Body of pancreas (tissue), 4 donors: ENCODE measurements at regions of chr10 and their contacts with region 1.

Region 1: GRCh38 chr10:79542626-79543025 is 17.6 kb downstream of the SFTPA2 start:
- DNase-seq: no peak
- ATAC-seq: no peak
- H3K4me3 ChIP-seq: no peak overlapping the region
- H3K27ac ChIP-seq: no peak overlapping the region
- H3K4me1 ChIP-seq: peaks cover 7% of the 10 kb centered on the region
- H3K27me3 ChIP-seq: no peaks in the 10 kb centered on the region
- CTCF ChIP-seq: no peak
- POLR2A ChIP-seq: no peak

Region 2: DNA sequence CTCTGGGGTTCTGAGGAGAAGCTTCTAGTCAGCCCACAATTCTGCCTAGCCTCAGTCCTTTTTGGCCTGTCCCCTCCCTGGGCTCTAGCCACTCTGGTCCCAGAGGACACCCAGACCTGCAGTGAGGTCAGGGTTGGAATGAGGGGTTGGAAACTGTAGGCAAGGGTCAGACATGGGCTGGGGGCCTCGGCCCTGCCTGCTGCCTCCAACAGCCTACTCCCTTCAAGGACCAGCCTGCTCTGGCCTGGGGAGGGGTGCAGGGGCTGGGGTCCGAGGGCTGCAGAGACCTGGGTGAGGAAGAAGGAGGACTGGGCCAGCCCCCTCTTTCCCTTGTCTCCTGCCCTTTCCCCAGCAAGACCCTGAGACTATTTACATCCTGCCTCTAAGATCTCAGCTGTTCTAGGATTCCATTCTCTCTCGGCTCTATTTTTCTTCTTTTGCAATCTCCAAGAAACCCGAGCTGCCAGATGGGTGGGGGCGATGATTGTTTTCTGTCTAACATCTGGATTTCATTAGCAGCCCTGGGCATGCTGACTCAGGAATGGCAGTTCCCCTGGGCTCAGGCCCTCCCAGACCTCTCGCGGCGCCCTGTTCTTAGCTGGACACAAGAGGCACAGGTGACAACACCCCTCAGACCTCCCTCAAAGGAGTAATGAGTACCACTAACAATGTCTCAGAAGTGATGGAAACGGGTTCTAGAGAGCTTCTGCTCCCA is 120.3 kb before region 1 on chr10:
- intact Hi-C with region 1: no loop called
- DNase-seq: no peak
- ATAC-seq: no peak
- H3K4me3 ChIP-seq: no peak overlapping the region
- H3K27ac ChIP-seq: no peak overlapping the region
- H3K4me1 ChIP-seq: peaks cover 17% of the 10 kb centered on the region
- H3K27me3 ChIP-seq: no peaks in the 10 kb centered on the region
- CTCF ChIP-seq: no peak
- POLR2A ChIP-seq: no peak

Region 3: DNA sequence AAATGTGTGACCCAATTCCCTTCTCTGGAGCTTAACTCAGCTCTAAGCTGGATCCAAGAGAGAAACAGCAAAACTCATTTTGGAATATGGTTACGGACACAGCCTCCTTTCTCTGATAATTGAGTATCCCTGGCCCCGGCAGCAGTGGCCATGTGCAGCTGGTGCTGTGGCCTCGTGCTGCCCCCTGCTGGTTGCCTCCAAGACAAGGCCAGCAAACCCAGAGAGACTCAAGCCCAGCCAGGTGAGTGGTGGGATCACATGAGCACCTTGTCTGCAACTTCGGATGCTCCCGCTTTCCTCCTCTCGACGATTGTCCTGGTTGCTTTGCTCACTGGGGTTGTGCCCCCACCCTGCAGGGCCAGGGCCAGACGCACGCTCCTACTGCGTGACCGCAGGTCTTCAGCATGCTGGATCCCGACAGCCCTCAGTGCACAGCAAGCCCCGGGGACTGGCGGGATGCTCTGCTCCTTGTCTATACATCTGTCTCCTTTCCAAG is 386.8 kb after region 1 on chr10:
- intact Hi-C with region 1: loop called (anchors 10 kb)
- DNase-seq: peak; percentile 85 to 90 (median 88)
- ATAC-seq: peak; percentile 84
- H3K4me3 ChIP-seq: no peak overlapping the region
- H3K27ac ChIP-seq: no peak overlapping the region
- H3K4me1 ChIP-seq: peaks cover 8% of the 10 kb centered on the region
- H3K27me3 ChIP-seq: peaks cover 0 to 3% of the 10 kb centered on the region in 2 donors
- CTCF ChIP-seq: peak; percentile 68 to 95 (median 92)
- POLR2A ChIP-seq: no peak